ENCODE measurements at regions of chr2 and their contacts with region 1.

Region 1: GRCh38 chr2:202494300-202495229 is 118.4 kb downstream of the BMPR2 start:
- DNase-seq: no peak
- ATAC-seq: no peak
- H3K4me3 ChIP-seq: peak overlapping the region in 1 of 2 donors; percentile 34
- H3K27ac ChIP-seq: no peak overlapping the region
- H3K4me1 ChIP-seq: peaks cover 2 to 5% of the 10 kb centered on the region in 2 donors
- H3K27me3 ChIP-seq: no peaks in the 10 kb centered on the region

Region 2: GRCh38 chr2:202361108-202361507 is 133.5 kb before region 1 on chr2:
- intact Hi-C with region 1: no loop called
- DNase-seq: no peak
- ATAC-seq: no peak
- H3K4me3 ChIP-seq: no peak overlapping the region
- H3K27ac ChIP-seq: no peak overlapping the region
- H3K4me1 ChIP-seq: no peaks in the 10 kb centered on the region
- H3K27me3 ChIP-seq: no peaks in the 10 kb centered on the region

Region 3: DNA sequence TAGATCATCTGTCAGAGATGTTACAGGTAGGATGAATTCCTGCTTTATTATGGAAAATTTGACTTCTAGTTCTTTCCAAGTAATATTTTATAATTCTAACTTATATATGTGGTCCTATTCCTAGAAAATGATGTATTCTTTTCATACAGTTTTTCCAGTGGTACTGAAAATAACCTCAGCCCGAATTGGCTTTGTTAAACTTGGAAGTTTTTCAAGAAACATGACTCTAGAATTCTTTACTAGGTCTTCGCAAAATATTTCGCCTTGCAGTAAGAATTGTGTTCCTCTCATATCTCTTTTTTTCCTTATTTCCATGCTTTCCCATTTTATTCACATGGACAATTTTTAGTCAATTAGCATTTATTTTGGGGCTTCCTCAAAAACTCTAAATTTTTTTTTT is 57.9 kb before region 1 on chr2:
- intact Hi-C with region 1: loop called in 1 of 2 experiments (anchors 10 kb)
- DNase-seq: no peak
- ATAC-seq: no peak
- H3K4me3 ChIP-seq: no peak overlapping the region
- H3K27ac ChIP-seq: peak overlapping the region in 1 of 2 donors; percentile 61
- H3K4me1 ChIP-seq: peaks cover 3 to 9% of the 10 kb centered on the region in 2 donors
- H3K27me3 ChIP-seq: no peaks in the 10 kb centered on the region

Region 4: DNA sequence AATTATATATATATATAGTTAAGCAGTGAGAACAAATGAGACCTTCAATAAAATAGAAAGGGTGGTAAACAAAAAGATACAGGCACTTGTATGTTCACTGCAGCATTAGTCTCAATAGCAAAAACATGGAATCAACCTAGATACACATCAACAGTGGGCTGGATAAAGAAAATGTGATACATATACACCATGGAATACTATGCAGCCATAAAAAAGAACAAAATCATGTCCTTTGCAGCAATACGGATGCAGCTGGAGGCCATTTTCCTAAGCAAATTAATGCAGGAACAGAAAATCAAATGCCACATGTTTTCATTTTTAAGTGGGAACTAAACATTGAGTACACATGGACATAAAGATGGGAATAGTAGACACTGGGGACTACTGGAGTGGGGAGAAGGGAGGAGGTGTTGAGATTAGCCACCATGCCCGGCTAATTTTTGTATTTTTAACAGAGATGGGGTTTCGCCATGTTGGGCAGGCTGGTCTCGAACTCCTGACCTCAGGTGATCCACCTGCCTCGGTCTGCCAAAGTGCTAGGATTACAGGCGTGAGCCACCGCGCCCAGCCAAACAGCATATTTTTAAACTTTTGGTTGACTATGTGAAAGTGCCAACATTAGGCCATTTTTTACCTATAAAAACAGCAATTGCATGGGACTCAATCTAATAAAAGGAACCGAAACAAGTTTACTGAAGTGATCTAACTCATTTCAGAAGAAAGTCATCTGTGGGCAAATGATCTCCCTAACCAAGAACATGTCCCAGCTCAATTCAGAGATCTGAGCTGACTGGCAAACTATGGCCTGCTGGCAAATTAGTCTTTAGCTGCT is 353.3 kb after region 1 on chr2:
- intact Hi-C with region 1: no loop called
- DNase-seq: no peak
- ATAC-seq: no peak
- H3K4me3 ChIP-seq: no peak overlapping the region
- H3K27ac ChIP-seq: no peak overlapping the region
- H3K4me1 ChIP-seq: no peaks in the 10 kb centered on the region
- H3K27me3 ChIP-seq: no peaks in the 10 kb centered on the region

Measured in aorta (tissue), 5 donors.